ENCODE measurements at regions of chr19 and their contacts with region 1.

Region 1: DNA sequence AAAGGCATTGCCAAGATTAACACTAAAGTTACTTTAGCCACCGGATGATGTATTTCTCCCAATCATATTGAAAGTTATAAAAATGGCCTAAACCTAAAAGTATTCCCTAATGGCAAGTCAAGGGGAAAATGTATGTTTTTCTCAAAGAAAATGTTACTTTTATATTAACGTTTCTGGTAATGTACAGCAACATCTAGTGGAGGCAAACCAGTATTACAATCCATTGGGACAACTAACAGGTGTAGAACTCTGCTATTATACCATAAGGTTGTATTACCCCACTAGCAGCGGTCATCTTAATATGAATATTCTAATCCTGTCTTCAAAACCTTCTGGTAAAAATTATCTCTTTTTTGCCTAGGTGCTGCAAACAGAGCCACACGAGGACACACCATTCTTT is 69.2 kb downstream of the ZNF100 start:
- DNase-seq: peak; percentile 12 to 42 (median 20)
- H3K4me3 ChIP-seq: no peak overlapping the region
- H3K4me3 Mint-ChIP-seq: no peak overlapping the region
- H3K27ac ChIP-seq: no peak overlapping the region
- H3K27ac Mint-ChIP-seq: no peak overlapping the region
- H3K4me1 ChIP-seq: no peaks in the 10 kb centered on the region
- H3K4me1 Mint-ChIP-seq: no peaks in the 10 kb centered on the region
- H3K27me3 ChIP-seq: no peaks in the 10 kb centered on the region
- H3K27me3 Mint-ChIP-seq: peaks cover 0 to 5% (median 1%) of the 10 kb centered on the region in 3 donors
- CTCF ChIP-seq: peak; percentile 76

Region 2: GRCh38 chr19:21482863-21483276 is 215.3 kb before region 1 on chr19:
- intact Hi-C with region 1: loop called in 1 of 2 experiments (anchors 5 kb)
- DNase-seq: peak; percentile 38 to 64 (median 45)
- H3K4me3 ChIP-seq: peak overlapping the region in 1 of 3 experiments; percentile 30
- H3K4me3 Mint-ChIP-seq: peak overlapping the region in 1 of 2 donors; percentile 65
- H3K27ac ChIP-seq: no peak overlapping the region
- H3K27ac Mint-ChIP-seq: no peak overlapping the region
- H3K4me1 ChIP-seq: peaks cover 0 to 3% of the 10 kb centered on the region in 2 donors
- H3K4me1 Mint-ChIP-seq: no peaks in the 10 kb centered on the region
- H3K27me3 ChIP-seq: no peaks in the 10 kb centered on the region
- H3K27me3 Mint-ChIP-seq: peaks cover 0 to 1% (median 0%) of the 10 kb centered on the region in 3 donors
- CTCF ChIP-seq: peak; percentile 96

Region 3: DNA sequence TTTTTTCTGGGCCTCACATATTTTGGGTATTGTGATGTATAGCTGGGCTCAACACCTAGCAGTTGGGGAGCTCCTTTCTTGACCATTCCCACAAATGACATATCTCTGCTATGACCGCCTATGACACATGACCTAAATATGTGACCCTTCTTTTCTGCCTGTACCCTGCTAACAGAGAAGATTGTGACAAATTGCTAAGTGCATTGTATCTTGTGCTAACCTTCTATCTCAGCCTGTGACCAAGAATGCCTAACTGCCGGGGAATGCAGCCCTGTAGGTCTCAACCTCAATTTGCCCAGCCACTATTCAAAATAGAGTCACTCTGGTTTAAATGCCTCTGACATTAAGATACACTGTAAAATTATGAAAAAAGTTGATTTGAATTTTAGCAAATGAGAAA is 199.6 kb before region 1 on chr19:
- intact Hi-C with region 1: no loop called
- DNase-seq: no peak
- H3K4me3 ChIP-seq: no peak overlapping the region
- H3K4me3 Mint-ChIP-seq: no peak overlapping the region
- H3K27ac ChIP-seq: no peak overlapping the region
- H3K27ac Mint-ChIP-seq: no peak overlapping the region
- H3K4me1 ChIP-seq: no peaks in the 10 kb centered on the region
- H3K4me1 Mint-ChIP-seq: peaks cover 4% of the 10 kb centered on the region
- H3K27me3 ChIP-seq: no peaks in the 10 kb centered on the region
- H3K27me3 Mint-ChIP-seq: no peaks in the 10 kb centered on the region
- CTCF ChIP-seq: no peak

Region 4: DNA sequence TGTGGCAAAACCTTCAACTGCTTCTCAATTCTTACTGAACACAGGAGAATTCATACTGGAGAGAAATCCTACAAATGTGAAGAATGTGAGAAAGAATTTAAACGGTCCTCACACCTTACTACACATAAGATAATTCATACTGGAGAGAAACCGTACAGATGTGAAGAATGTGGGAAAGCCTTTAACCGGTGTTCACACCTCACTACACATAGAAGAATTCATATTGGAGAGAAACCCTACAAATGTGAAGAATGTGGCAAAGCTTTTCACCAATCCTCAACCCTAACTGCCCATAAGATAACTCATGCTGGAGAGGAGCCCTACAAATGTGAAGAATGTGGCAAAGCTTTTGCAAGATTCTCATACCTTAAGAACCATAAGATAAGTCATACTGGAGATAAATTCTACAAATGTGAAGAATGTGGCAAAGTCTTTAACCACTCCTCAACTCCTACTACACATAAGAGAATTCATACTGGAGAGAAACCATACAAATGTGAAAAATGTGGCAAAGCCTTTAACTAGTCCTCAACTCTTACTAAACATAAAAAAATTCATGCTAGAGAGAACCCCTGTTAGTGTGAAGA is 42.6 kb before region 1 on chr19:
- intact Hi-C with region 1: no loop called
- DNase-seq: no peak
- H3K4me3 ChIP-seq: no peak overlapping the region
- H3K4me3 Mint-ChIP-seq: no peak overlapping the region
- H3K27ac ChIP-seq: no peak overlapping the region
- H3K27ac Mint-ChIP-seq: no peak overlapping the region
- H3K4me1 ChIP-seq: no peaks in the 10 kb centered on the region
- H3K4me1 Mint-ChIP-seq: no peaks in the 10 kb centered on the region
- H3K27me3 ChIP-seq: no peaks in the 10 kb centered on the region
- H3K27me3 Mint-ChIP-seq: no peaks in the 10 kb centered on the region
- CTCF ChIP-seq: no peak

Region 5: GRCh38 chr19:21838646-21839045 is 140.4 kb after region 1 on chr19:
- intact Hi-C with region 1: no loop called
- DNase-seq: no peak
- H3K4me3 ChIP-seq: no peak overlapping the region
- H3K4me3 Mint-ChIP-seq: no peak overlapping the region
- H3K27ac ChIP-seq: no peak overlapping the region
- H3K27ac Mint-ChIP-seq: no peak overlapping the region
- H3K4me1 ChIP-seq: peaks cover 13 to 18% of the 10 kb centered on the region in 2 donors
- H3K4me1 Mint-ChIP-seq: peaks cover 4% of the 10 kb centered on the region
- H3K27me3 ChIP-seq: no peaks in the 10 kb centered on the region
- H3K27me3 Mint-ChIP-seq: peaks cover 0 to 3% (median 0%) of the 10 kb centered on the region in 3 donors
- CTCF ChIP-seq: no peak